ENCODE measurements at regions of chr12 and their contacts with region 1.

Region 1: GRCh38 chr12:12696562-12697383 is 790 bp upstream of the GPR19 start:
- DNase-seq: peak; percentile 90 to 97 (median 92)
- ATAC-seq: peak; percentile 83
- H3K4me3 ChIP-seq: peak overlapping the region; percentile 61
- H3K4me3 Mint-ChIP-seq: peak overlapping the region; percentile 94
- H3K27ac ChIP-seq: peak overlapping the region; percentile 96 to 97
- H3K27ac Mint-ChIP-seq: peak overlapping the region; percentile 100
- H3K4me1 ChIP-seq: peaks cover 7% of the 10 kb centered on the region
- H3K4me1 Mint-ChIP-seq: peaks cover 41% of the 10 kb centered on the region
- H3K27me3 ChIP-seq: no peaks in the 10 kb centered on the region
- H3K27me3 Mint-ChIP-seq: no peaks in the 10 kb centered on the region
- CTCF ChIP-seq: no peak

Region 2: GRCh38 chr12:12807970-12808702 is 111.4 kb after region 1 on chr12:
- CTCF ChIA-PET with region 1: no interaction called
- POLR2A ChIA-PET with region 1: interaction called, 10 read pairs
- intact Hi-C with region 1: no loop called
- DNase-seq: peak; percentile 45 to 89 (median 61)
- ATAC-seq: peak; percentile 78
- H3K4me3 ChIP-seq: no peak overlapping the region
- H3K4me3 Mint-ChIP-seq: peak overlapping the region; percentile 72
- H3K27ac ChIP-seq: peak overlapping the region; percentile 70 to 94
- H3K27ac Mint-ChIP-seq: peak overlapping the region; percentile 97
- H3K4me1 ChIP-seq: peaks cover 49% of the 10 kb centered on the region
- H3K4me1 Mint-ChIP-seq: peaks cover 54% of the 10 kb centered on the region
- H3K27me3 ChIP-seq: no peaks in the 10 kb centered on the region
- H3K27me3 Mint-ChIP-seq: no peaks in the 10 kb centered on the region
- CTCF ChIP-seq: no peak

Region 3: GRCh38 chr12:13316587-13317246 is 619.9 kb after region 1 on chr12:
- CTCF ChIA-PET with region 1: no interaction called
- POLR2A ChIA-PET with region 1: no interaction called
- intact Hi-C with region 1: no loop called
- DNase-seq: no peak
- ATAC-seq: no peak
- H3K4me3 ChIP-seq: no peak overlapping the region
- H3K4me3 Mint-ChIP-seq: no peak overlapping the region
- H3K27ac ChIP-seq: no peak overlapping the region
- H3K27ac Mint-ChIP-seq: no peak overlapping the region
- H3K4me1 ChIP-seq: no peaks in the 10 kb centered on the region
- H3K4me1 Mint-ChIP-seq: no peaks in the 10 kb centered on the region
- H3K27me3 ChIP-seq: peaks cover 5 to 8% of the 10 kb centered on the region in 2 experiments
- H3K27me3 Mint-ChIP-seq: peaks cover 58% of the 10 kb centered on the region
- CTCF ChIP-seq: no peak

Measured in CD4-positive, alpha-beta T cell (primary cell).